Right cardiac atrium (tissue), 5 donors: ENCODE measurements at regions of chr9 and their contacts with region 1.

Region 1: GRCh38 chr9:86637515-86637914 is 283.3 kb upstream of the TUT7 start:
- DNase-seq: peak; percentile 37 to 72 (median 66)
- ATAC-seq: peak; percentile 62 to 69
- H3K4me3 ChIP-seq: no peak overlapping the region
- H3K27ac ChIP-seq: no peak overlapping the region
- H3K4me1 ChIP-seq: no peaks in the 10 kb centered on the region
- H3K27me3 ChIP-seq: no peaks in the 10 kb centered on the region

Region 2: GRCh38 chr9:86368871-86369521 is 268.5 kb before region 1 on chr9:
- intact Hi-C with region 1: no loop called
- DNase-seq: no peak
- ATAC-seq: peak in 1 of 2 donors; percentile 43
- H3K4me3 ChIP-seq: no peak overlapping the region
- H3K27ac ChIP-seq: no peak overlapping the region
- H3K4me1 ChIP-seq: no peaks in the 10 kb centered on the region
- H3K27me3 ChIP-seq: no peaks in the 10 kb centered on the region

Region 3: GRCh38 chr9:86843206-86843605 is 205.7 kb after region 1 on chr9:
- intact Hi-C with region 1: no loop called
- DNase-seq: no peak
- ATAC-seq: peak; percentile 27 to 44
- H3K4me3 ChIP-seq: no peak overlapping the region
- H3K27ac ChIP-seq: no peak overlapping the region
- H3K4me1 ChIP-seq: peaks cover 2% of the 10 kb centered on the region
- H3K27me3 ChIP-seq: no peaks in the 10 kb centered on the region

Region 4: DNA sequence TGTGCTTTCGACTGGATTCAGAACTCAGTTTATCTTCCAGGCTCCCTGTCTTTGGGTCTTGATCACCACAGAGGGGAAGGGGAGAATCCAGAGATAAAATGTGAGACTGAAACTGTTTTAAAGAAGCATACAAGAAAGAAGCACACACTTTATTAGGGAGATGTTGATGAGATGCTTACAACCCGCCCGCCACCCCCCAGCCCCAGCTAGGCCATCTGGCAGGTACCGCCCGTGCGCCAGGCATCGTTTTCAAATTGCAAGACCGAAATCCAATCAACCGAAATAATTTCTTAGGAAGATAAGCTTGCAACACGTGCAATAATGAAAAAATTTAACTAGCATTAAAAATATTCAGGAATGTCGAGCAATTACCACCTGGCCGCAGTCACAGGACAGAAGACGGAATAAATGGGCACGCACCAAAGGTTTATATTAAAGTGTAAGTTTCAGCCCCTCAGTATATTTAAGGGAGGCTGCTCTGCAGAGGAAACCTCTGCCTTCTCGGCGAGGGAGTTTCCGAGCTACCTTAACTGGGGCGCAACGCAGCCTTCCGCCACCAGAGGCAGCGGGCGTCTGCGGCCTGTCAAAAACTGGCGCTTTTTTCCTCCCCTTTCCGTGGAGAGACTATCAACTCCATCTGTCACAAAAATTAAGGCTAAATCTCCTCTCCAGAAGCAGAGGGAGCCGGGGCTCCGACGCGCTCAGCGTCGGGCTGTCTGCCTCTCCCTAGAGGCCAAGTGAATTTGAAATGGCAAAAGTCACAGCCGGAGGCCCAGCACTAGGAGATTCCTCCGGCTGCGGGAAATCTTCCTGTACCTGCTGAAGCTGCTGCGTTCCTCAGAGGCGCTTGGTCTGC is 310.8 kb after region 1 on chr9:
- intact Hi-C with region 1: loop called in 1 of 4 experiments (anchors 10 kb)
- DNase-seq: peak; percentile 80 to 93 (median 91)
- ATAC-seq: peak; percentile 76 to 84
- H3K4me3 ChIP-seq: peak overlapping the region; percentile 95
- H3K27ac ChIP-seq: peak overlapping the region; percentile 75
- H3K4me1 ChIP-seq: no peaks in the 10 kb centered on the region
- H3K27me3 ChIP-seq: no peaks in the 10 kb centered on the region